ENCODE measurements at regions of chr11 and their contacts with region 1.

Region 1: GRCh38 chr11:62678770-62679696 is at the start of gene UBXN1:
- DNase-seq: peak; percentile 84

Region 2: DNA sequence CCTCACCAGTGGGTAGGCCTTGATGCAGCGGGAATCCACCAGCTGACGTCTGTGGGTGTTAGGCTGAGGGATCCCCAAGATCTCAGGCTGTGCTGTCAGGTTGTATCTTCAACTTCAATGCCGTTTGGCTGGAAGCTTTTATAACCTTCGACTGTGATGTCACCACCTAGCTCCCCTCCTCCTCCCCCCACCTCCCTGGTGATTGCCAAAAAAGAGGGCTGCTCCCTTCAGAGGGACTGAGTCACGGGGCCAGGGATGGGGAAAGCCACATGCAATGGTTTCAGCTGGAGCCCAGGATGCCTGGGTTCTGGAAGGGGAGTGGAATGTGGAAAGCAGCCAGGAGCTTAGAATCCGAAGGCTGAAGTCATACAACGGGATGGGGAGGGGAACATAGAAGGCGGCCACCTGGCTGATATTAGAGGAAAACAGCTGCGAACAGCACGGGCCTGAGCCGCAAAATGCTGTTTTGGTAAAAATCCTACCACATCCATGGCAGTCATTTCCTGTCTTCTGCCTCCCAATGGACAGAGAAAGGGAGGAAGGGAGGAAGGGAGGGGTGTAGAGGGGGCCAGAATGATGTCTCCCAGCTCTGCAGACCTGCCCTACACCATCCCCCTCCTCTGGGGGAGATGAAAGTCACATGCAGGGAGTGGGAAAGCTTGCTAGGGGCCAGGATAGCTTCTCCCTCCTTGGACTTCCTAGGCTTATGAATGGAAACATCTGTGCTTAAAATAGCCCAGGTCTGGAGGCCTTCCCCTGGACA is 10.6 kb after region 1 on chr11 and contains the start of gene LRRN4CL:
- CTCF ChIA-PET with region 1: interaction called, 13 read pairs
- POLR2A ChIA-PET with region 1: interaction called, 17 read pairs
- DNase-seq: no peak

Region 3: GRCh38 chr11:62694455-62695167 is 15.6 kb after region 1 on chr11:
- CTCF ChIA-PET with region 1: interaction called, 13 read pairs
- POLR2A ChIA-PET with region 1: interaction called, 17 read pairs
- DNase-seq: peak; percentile 69

Region 4: DNA sequence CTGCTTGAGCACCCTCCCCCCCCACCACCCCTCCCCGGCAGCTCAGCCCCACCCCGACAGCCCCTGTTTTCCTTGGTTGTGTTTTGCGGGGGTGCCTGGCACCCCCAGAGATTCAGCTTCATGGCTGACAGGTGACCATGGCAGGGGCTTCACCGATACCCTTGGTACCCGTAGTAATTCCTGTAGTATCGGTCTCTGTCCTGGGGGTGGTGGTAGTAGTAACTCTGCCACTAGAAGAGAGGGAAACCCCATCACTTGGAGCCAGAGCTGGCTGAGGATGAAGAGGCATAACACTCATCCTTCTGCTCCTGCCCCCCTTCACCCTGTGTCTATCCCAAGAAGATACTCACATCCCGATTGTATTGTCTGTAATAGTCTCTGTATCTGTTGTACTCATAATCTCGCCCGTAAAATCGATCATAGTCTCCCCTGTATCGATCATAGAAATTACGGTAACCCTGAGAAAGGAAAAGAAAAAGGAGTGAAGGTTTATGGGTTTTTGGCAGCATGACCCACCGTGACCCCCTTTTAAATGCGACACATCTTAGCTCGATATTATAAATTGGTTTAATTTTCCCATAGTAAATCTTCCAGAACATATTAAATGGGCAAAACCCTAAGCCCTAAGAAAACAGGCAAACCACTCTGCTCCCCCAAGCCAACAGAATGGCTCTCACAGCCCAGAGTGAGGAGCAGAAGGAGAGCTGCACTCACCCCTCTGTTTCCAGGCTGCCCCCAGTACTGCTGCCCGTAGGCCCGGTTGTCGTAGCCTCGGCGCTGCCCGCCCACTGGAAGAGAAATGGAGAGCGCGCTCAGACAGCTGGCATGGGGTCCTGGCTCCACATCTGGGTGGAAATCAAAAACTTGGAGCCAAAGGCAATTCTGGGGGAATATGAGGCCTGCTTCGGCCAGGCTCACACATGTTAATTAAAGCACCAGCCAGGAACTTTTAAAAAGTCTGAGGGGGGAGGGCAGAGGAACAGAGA is 36.4 kb after region 1 on chr11:
- CTCF ChIA-PET with region 1: no interaction called
- POLR2A ChIA-PET with region 1: no interaction called
- DNase-seq: no peak

Region 5: GRCh38 chr11:63321723-63322122 is 642.7 kb after region 1 on chr11:
- CTCF ChIA-PET with region 1: no interaction called
- POLR2A ChIA-PET with region 1: no interaction called
- DNase-seq: no peak

Measured in HEK293T (cell line).